HEK293T (cell line): ENCODE measurements at regions of chr11 and their contacts with region 1.

Region 1: DNA sequence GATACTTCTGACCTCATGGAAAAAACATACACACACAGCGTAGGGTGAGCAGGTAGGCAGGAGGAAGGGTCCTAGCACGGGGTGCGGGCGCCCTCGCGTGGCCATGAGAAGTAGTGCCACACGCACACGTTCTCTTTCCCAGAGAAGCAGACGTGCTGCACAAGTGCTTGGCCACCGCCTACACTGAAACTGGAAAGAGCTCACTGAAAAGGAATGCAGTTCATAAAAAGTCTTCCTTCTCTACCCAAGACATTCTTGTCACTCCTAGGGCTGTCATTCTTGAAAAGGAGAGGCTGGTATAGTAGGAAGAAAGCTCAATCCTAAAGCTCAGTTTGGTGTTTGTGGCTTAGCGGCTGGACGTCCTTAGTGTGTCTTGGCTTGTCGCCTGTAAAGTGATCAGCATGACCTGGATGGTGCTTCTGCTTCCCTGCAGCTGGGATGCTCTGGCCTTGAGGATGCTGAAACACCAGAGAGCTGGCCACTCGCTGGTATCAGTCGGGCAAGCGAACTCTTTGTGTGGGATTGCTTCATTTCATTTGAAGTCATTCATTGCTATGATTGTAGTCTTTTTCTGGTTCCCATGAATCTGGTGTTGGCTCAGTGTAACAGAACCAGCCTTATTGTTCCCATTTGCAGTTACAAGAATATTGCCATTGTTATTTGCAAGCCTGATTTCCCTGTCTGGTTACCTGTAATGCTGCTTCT is 303.8 kb downstream of the NTM start:
- DNase-seq: peak; percentile 75

Region 2: DNA sequence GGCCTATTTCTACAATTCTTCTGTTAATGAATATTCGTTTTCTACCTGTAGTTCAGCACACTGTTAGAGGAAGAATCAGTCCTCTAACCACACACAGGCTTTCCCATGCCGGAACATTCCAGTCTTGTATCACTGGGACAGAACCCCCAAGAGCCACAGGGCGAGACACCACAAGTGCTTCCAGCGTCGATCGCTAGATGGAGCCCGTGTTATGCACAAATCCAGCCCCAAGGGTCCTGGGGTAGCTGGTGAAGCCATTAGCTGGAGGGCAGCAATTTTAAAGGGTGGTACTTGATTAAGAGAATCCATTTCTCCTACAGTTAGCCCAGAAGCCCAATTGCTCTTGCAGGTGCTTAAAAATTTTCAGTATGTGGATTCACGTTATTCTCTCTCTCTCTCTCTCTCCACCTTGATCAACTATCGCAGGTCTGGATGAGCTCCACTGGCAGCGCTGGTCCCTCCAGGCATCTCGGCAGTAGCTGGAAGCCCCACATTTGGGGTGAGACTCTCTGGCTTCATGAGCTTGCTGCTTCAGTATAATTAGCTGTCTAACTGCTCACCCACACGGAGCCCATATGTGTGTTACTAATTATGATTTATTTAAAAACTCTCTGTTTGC is 609.7 kb before region 1 on chr11:
- CTCF ChIA-PET with region 1: interaction called, 17 read pairs
- POLR2A ChIA-PET with region 1: no interaction called
- DNase-seq: peak; percentile 74

Region 3: GRCh38 chr11:131579932-131580387 is 94.2 kb before region 1 on chr11:
- CTCF ChIA-PET with region 1: interaction called, 11 read pairs
- POLR2A ChIA-PET with region 1: no interaction called
- DNase-seq: peak; percentile 61

Region 4: DNA sequence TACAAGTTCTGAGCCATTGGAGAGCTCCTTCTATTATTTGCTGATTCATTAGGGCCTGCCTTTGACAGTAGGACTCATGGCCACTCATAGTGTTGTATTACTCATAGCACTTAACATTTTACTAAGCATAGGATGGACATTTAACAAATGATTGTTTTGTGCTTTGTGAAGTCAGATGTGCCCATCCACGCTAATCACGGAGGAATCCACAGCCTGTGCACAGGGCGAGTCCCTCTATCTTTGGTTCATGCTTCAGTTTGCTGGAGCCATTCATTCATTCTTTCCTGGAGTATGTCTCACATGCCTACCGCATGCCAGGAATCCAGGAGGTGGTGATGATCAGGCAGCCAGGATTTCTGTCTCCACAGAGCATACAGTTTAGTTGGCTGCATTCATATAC is 49.7 kb before region 1 on chr11:
- CTCF ChIA-PET with region 1: no interaction called
- POLR2A ChIA-PET with region 1: no interaction called
- DNase-seq: no peak